B cell (primary cell): ENCODE measurements at regions of chr6 and their contacts with region 1.

Region 1: DNA sequence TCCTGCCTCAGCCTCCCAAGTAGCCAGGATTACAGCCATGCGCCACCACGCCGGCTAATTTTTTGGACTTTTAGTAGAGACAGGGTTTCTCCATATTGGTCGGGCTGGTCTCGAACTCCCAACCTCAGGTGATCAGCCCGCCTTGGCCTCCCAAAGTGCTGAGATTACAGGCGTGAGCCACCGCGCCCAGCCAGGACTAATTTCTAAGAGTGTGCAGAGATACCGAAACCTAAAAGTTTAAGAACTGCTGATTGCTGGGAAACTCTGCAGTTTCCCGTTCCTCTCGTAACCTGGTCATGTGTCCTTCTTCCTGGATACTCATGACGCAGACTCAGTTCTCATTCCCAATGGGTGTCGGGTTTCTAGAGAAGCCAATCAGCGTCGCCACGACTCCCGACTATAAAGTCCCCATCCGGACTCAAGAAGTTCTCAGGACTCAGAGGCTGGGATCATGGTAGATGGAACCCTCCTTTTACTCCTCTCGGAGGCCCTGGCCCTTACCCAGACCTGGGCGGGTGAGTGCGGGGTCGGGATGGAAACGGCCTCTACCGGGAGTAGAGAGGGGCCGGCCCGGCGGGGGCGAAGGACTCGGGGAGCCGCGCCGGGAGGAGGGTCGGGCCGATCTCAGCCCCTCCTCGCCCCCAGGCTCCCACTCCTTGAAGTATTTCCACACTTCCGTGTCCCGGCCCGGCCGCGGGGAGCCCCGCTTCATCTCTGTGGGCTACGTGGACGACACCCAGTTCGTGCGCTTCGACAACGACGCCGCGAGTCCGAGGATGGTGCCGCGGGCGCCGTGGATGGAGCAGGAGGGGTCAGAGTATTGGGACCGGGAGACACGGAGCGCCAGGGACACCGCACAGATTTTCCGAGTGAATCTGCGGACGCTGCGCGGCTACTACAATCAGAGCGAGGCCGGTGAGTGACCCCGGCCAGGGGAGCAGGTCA is at the start of gene HLA-E:
- DNase-seq: peak; percentile 98
- ATAC-seq: peak; percentile 84
- H3K4me3 ChIP-seq: peak within 1 kb of the TSS; percentile 99 to 100 (median 100)
- H3K4me3 Mint-ChIP-seq: peak within 1 kb of the TSS; percentile 99
- H3K27ac ChIP-seq: peak within 1 kb of the TSS; percentile 97 to 98
- H3K27ac Mint-ChIP-seq: peak within 1 kb of the TSS; percentile 98
- H3K4me1 ChIP-seq: peaks cover 38 to 50% of the 10 kb centered on the region in 2 donors
- H3K4me1 Mint-ChIP-seq: peaks cover 56% of the 10 kb centered on the region
- H3K27me3 ChIP-seq: no peaks in the 10 kb centered on the region
- H3K27me3 Mint-ChIP-seq: no peaks in the 10 kb centered on the region
- CTCF ChIP-seq: no peak
- total RNA-seq, gene HLA-E: 1,023 and 1,043 TPM in 2 replicates

Region 2: DNA sequence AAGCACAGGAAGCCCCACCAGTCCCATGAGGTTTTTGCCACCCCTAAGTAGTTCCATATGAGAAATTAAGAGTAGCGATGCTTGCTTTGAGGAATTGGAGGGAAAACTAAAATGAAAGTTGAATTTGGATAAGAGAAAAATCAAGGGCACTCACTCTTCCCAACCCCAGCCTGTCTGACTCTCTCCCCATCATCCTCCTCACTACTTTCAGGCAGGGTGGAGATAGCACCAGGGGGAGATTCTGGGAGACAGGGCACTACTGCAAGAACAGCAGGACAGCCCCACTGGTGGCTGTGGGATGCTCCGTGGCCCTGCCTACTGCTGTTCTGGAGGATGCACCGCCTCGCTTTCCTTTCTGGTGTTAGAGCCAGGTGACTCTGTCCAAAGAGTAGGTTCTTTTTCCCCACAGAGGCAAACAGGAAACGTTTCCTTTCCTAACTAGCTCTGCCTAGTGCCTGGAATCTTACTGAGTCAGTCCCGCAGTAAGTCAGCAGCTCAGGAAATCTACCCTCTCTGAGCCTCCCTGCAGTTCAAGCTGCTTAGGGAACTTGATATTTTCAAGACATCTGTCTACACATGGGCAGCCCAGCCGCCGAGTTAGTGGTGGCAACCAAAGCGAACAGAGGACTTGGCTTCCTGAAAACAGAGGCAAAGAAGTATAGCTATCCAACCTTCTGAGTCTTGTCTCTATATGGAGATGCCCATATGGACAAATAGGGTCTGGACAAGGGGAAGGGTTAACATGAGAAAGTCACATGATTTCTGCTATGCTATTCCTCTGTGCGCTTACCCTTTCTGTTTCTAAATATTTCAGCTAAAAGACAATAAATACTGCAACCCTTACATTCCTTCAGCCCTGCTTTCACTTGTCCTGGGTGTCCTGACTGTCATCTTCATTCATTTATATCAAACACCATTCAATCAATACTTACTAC is 11.3 kb after region 1 on chr6:
- CTCF ChIA-PET with region 1: interaction called, 42 read pairs
- POLR2A ChIA-PET with region 1: interaction called, 15 read pairs
- intact Hi-C with region 1: no loop called
- DNase-seq: peak; percentile 49
- ATAC-seq: peak; percentile 52
- H3K4me3 ChIP-seq: peak overlapping the region in 3 of 5 experiments; percentile 22 to 55 (median 27)
- H3K4me3 Mint-ChIP-seq: peak overlapping the region; percentile 77
- H3K27ac ChIP-seq: peak overlapping the region in 1 of 2 donors; percentile 48
- H3K27ac Mint-ChIP-seq: peak overlapping the region; percentile 58
- H3K4me1 ChIP-seq: peaks cover 25 to 38% of the 10 kb centered on the region in 2 donors
- H3K4me1 Mint-ChIP-seq: peaks cover 46% of the 10 kb centered on the region
- H3K27me3 ChIP-seq: no peaks in the 10 kb centered on the region
- H3K27me3 Mint-ChIP-seq: no peaks in the 10 kb centered on the region
- CTCF ChIP-seq: no peak

Region 3: DNA sequence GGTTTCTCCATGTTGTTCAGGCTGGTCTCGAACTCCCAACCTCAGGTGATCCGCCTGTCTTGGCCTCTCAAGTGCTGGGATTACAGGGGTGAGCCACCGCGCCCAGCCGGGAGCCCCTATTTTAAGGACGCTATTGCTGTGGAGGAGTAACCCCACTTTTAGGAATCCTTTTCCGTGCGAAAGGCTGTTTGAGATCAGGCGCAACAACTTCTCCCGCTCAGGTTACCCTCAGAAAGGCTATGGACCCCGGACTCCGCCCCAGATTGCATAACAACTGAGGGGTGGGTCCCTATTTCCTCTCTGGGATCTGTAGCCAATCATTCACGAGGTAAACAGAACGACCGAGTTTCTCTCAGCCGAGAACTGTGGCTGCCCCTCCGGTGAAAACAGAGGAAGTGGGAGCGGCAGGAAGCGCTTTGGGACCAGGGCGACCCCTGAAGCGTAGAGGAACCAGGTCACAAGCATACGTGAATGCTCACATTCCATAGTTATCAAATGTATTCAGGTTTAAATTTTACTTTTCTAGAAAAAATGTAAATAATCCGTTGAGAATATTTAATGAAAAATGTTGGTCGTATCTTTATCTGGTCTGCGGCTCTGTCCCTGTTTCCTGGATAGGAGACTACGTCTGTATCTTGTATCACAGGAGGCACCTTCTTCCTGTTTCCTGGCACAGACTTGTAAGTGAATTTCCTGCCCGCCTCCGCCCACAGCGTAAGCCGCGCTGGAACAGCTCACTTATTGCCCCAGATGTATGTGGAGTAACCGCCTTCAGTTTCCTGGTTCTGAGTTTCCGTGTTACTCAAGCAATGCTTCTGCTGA is 26.8 kb after region 1 on chr6:
- CTCF ChIA-PET with region 1: interaction called, 45 read pairs
- POLR2A ChIA-PET with region 1: interaction called, 25 read pairs
- intact Hi-C with region 1: loop called (anchors 1 kb)
- DNase-seq: peak; percentile 95
- ATAC-seq: peak; percentile 85
- H3K4me3 ChIP-seq: peak overlapping the region; percentile 31 to 73 (median 58)
- H3K4me3 Mint-ChIP-seq: peak overlapping the region; percentile 90
- H3K27ac ChIP-seq: peak overlapping the region; percentile 88 to 99
- H3K27ac Mint-ChIP-seq: peak overlapping the region; percentile 99
- H3K4me1 ChIP-seq: peaks cover 34 to 66% of the 10 kb centered on the region in 2 donors
- H3K4me1 Mint-ChIP-seq: peaks cover 60% of the 10 kb centered on the region
- H3K27me3 ChIP-seq: no peaks in the 10 kb centered on the region
- H3K27me3 Mint-ChIP-seq: no peaks in the 10 kb centered on the region
- CTCF ChIP-seq: no peak

Region 4: GRCh38 chr6:30556066-30556905 is 66.9 kb after region 1 on chr6 and contains the start of gene GNL1:
- CTCF ChIA-PET with region 1: interaction called, 4 read pairs
- POLR2A ChIA-PET with region 1: interaction called, 10 read pairs
- intact Hi-C with region 1: loop called (anchors 1 kb)
- DNase-seq: peak; percentile 100
- ATAC-seq: peak; percentile 89
- H3K4me3 ChIP-seq: peak within 1 kb of the TSS; percentile 81 to 100 (median 94)
- H3K4me3 Mint-ChIP-seq: peak within 1 kb of the TSS; percentile 99
- H3K27ac ChIP-seq: peak within 1 kb of the TSS; percentile 91 to 95
- H3K27ac Mint-ChIP-seq: peak within 1 kb of the TSS; percentile 99
- H3K4me1 ChIP-seq: peaks cover 19 to 27% of the 10 kb centered on the region in 2 donors
- H3K4me1 Mint-ChIP-seq: peaks cover 32% of the 10 kb centered on the region
- H3K27me3 ChIP-seq: no peaks in the 10 kb centered on the region
- H3K27me3 Mint-ChIP-seq: no peaks in the 10 kb centered on the region
- CTCF ChIP-seq: no peak
- total RNA-seq, gene GNL1: 107 and 109 TPM in 2 replicates

Region 5: GRCh38 chr6:31087494-31088089 is 598.2 kb after region 1 on chr6:
- CTCF ChIA-PET with region 1: no interaction called
- POLR2A ChIA-PET with region 1: no interaction called
- intact Hi-C with region 1: loop called (anchors 10 kb)
- DNase-seq: peak; percentile 89
- ATAC-seq: peak; percentile 95
- H3K4me3 ChIP-seq: no peak overlapping the region
- H3K4me3 Mint-ChIP-seq: no peak overlapping the region
- H3K27ac ChIP-seq: no peak overlapping the region
- H3K27ac Mint-ChIP-seq: no peak overlapping the region
- H3K4me1 ChIP-seq: no peaks in the 10 kb centered on the region
- H3K4me1 Mint-ChIP-seq: no peaks in the 10 kb centered on the region
- H3K27me3 ChIP-seq: no peaks in the 10 kb centered on the region
- H3K27me3 Mint-ChIP-seq: peaks cover 21% of the 10 kb centered on the region
- CTCF ChIP-seq: peak; percentile 84